CD4-positive, alpha-beta T cell (primary cell): ENCODE measurements at regions of chr19 and their contacts with region 1.

Region 1: DNA sequence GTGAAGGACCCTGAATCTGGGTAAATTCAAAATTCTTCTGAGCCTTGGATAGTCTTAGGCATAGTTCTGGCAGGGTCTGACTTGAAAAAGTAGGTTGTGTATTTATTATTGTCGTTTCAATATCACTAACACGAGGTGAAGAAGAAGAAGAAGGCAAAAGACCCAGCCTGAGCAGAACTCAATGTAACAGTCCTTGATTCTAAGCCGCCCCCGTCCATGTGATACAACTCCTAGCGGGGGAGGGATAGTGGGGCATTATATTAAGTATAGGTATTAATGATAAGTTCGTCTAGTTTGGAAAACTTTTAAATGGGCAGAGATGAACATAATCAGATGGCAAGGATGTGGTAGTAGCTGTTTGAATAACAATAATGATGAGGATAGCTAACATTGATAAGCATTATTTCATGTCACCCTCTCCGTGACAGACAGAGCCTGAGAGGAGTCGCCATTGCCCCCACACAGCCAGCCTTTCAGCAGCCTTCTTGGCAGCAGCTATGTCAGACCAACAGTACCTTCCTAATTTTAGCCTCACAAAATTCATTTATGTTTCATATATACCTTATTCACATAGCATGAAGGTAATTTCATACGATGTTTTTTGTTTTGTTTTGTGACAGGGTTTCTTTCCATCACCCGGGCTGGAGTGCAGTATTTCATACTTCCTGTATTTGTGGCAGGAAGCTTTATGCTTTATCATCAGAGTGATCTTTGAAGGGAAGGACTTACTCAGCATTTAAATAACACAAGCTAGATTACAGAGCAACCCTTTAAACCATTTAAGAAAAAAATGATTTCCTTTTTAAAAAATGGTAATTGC is 64.4 kb upstream of the NPAS1 start:
- DNase-seq: peak in 9 of 14 experiments; percentile 4 to 84 (median 27)
- ATAC-seq: peak; percentile 90
- H3K4me3 ChIP-seq: peak overlapping the region; percentile 53
- H3K4me3 Mint-ChIP-seq: peak overlapping the region; percentile 83
- H3K27ac ChIP-seq: peak overlapping the region; percentile 52 to 73
- H3K27ac Mint-ChIP-seq: peak overlapping the region; percentile 90
- H3K4me1 ChIP-seq: peaks cover 84% of the 10 kb centered on the region
- H3K4me1 Mint-ChIP-seq: peaks cover 78% of the 10 kb centered on the region
- H3K27me3 ChIP-seq: no peaks in the 10 kb centered on the region
- H3K27me3 Mint-ChIP-seq: no peaks in the 10 kb centered on the region
- CTCF ChIP-seq: no peak

Region 2: DNA sequence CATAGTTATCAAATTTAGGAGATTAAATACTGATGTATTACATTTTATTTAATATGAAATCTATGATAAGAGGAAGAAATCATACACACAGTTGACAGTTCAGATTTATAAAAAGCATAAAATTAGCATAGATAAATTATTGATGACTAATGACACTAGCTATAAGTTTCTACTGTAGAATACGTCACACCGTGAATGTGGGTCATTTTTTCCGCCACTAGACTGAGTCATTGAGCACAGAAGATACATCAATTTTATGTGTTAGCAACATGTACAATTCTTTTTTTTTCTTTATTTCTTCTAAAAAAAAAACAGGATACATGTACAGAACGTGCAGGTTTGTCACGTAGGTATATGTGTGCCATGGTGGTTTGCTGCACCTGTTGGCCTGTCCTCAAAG is 126.7 kb before region 1 on chr19:
- CTCF ChIA-PET with region 1: no interaction called
- POLR2A ChIA-PET with region 1: no interaction called
- intact Hi-C with region 1: no loop called
- DNase-seq: peak in 1 of 14 experiments; percentile 13
- ATAC-seq: no peak
- H3K4me3 ChIP-seq: no peak overlapping the region
- H3K4me3 Mint-ChIP-seq: no peak overlapping the region
- H3K27ac ChIP-seq: no peak overlapping the region
- H3K27ac Mint-ChIP-seq: no peak overlapping the region
- H3K4me1 ChIP-seq: no peaks in the 10 kb centered on the region
- H3K4me1 Mint-ChIP-seq: no peaks in the 10 kb centered on the region
- H3K27me3 ChIP-seq: no peaks in the 10 kb centered on the region
- H3K27me3 Mint-ChIP-seq: peaks cover 4% of the 10 kb centered on the region
- CTCF ChIP-seq: no peak

Region 3: GRCh38 chr19:46913852-46914430 is 41.3 kb before region 1 on chr19:
- CTCF ChIA-PET with region 1: interaction called, 5 read pairs
- POLR2A ChIA-PET with region 1: interaction called, 3 read pairs
- intact Hi-C with region 1: loop called in 1 of 2 experiments (anchors 5 kb)
- DNase-seq: peak in 2 of 14 experiments; percentile 16 to 50
- ATAC-seq: no peak
- H3K4me3 ChIP-seq: no peak overlapping the region
- H3K4me3 Mint-ChIP-seq: peak overlapping the region; percentile 5
- H3K27ac ChIP-seq: no peak overlapping the region
- H3K27ac Mint-ChIP-seq: peak overlapping the region; percentile 41
- H3K4me1 ChIP-seq: peaks cover 12% of the 10 kb centered on the region
- H3K4me1 Mint-ChIP-seq: peaks cover 50% of the 10 kb centered on the region
- H3K27me3 ChIP-seq: no peaks in the 10 kb centered on the region
- H3K27me3 Mint-ChIP-seq: no peaks in the 10 kb centered on the region
- CTCF ChIP-seq: no peak

Region 4: DNA sequence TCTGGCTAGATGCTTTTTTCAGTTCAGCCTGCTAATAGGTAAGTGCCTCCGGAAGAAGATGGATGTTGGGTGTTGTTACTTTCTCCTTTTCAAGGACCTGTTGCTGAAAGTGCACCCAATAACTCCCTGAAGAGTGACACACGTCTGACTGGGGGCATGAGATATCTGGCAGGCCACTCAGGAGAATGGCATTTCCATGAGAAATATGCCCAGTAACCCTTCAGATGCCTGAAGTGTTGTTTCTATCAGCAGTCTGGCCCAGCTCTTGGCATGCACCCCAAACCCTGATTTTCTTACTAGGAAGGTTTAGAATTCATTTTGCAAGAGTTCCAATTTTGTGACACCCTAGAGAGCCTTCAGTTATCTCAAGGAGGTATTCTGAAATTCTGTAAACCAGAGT is 22.9 kb before region 1 on chr19:
- CTCF ChIA-PET with region 1: no interaction called
- POLR2A ChIA-PET with region 1: interaction called, 20 read pairs
- intact Hi-C with region 1: loop called in 1 of 2 experiments (anchors 2 kb)
- DNase-seq: no peak
- ATAC-seq: no peak
- H3K4me3 ChIP-seq: no peak overlapping the region
- H3K4me3 Mint-ChIP-seq: no peak overlapping the region
- H3K27ac ChIP-seq: no peak overlapping the region
- H3K27ac Mint-ChIP-seq: peak overlapping the region; percentile 82
- H3K4me1 ChIP-seq: peaks cover 65% of the 10 kb centered on the region
- H3K4me1 Mint-ChIP-seq: peaks cover 70% of the 10 kb centered on the region
- H3K27me3 ChIP-seq: no peaks in the 10 kb centered on the region
- H3K27me3 Mint-ChIP-seq: no peaks in the 10 kb centered on the region
- CTCF ChIP-seq: no peak

Region 5: DNA sequence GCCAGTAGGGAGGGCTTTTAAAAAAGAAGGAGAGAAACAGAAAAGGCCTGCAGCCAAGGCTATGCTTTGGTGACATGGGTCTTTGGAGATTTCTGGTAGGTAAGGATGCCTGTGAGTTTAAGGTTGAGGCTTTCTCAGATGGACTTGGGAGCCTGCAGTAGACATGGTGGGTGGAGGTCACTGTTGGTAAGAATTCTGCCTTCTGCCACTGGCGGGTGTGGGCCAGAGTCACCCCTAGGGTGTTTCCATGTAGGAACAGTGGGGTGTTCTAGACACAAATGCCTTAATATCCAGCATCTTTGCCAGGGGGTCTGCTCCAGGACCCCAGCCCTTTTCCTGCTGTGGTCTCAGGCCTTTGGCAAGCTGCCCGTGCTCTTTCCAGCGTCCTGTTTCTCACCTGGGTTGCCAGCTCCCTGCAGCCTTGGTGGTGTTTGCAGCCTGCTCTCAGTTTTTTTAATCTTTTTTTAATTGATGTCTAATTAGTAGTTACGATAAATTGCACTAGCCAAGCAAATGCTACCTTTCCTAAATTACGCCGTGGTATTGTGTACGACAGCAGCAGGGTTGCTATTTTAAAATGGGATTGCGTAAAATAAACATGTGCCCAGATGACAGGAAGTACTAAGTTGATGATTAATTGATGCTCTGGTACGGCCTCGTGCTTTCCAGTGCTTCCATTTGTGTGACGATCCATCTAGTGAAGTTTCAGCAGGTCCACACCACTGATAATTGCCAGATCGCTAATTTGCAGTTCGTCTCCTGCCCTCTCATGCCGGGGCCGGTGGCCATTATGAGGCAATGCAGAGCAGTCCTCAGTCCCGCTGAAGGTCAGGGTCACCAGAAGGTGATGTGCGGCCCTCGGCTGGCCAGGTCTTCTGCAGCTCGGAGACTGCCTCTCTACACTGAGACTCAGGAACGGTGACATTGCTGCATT is 29.1 kb after region 1 on chr19:
- CTCF ChIA-PET with region 1: no interaction called
- POLR2A ChIA-PET with region 1: no interaction called
- intact Hi-C with region 1: no loop called
- DNase-seq: peak in 1 of 14 experiments; percentile 27
- ATAC-seq: no peak
- H3K4me3 ChIP-seq: no peak overlapping the region
- H3K4me3 Mint-ChIP-seq: no peak overlapping the region
- H3K27ac ChIP-seq: no peak overlapping the region
- H3K27ac Mint-ChIP-seq: no peak overlapping the region
- H3K4me1 ChIP-seq: peaks cover 13% of the 10 kb centered on the region
- H3K4me1 Mint-ChIP-seq: peaks cover 20% of the 10 kb centered on the region
- H3K27me3 ChIP-seq: no peaks in the 10 kb centered on the region
- H3K27me3 Mint-ChIP-seq: no peaks in the 10 kb centered on the region
- CTCF ChIP-seq: no peak